CD8-positive, alpha-beta memory T cell (primary cell): ENCODE measurements at regions of chr2 and their contacts with region 1.

Region 1: GRCh38 chr2:71068218-71069035 is at the start of gene NAGK:
- DNase-seq: peak; percentile 96 to 100 (median 99)
- H3K4me3 ChIP-seq: peak within 1 kb of the TSS; percentile 94
- H3K4me3 Mint-ChIP-seq: peak within 1 kb of the TSS; percentile 93 to 98 (median 96)
- H3K27ac ChIP-seq: peak within 1 kb of the TSS; percentile 96
- H3K27ac Mint-ChIP-seq: peak within 1 kb of the TSS; percentile 98 to 100 (median 99)
- H3K4me1 ChIP-seq: peaks cover 46% of the 10 kb centered on the region
- H3K4me1 Mint-ChIP-seq: peaks cover 52 to 67% (median 60%) of the 10 kb centered on the region in 3 donors
- H3K27me3 ChIP-seq: no peaks in the 10 kb centered on the region
- H3K27me3 Mint-ChIP-seq: peaks cover 0 to 5% of the 10 kb centered on the region in 2 donors
- total RNA-seq, gene NAGK: 76.3 to 77.2 TPM

Region 2: GRCh38 chr2:71000780-71001591 is 67.4 kb before region 1 on chr2:
- CTCF ChIA-PET with region 1: interaction called, 15 read pairs
- POLR2A ChIA-PET with region 1: no interaction called
- DNase-seq: peak; percentile 70 to 88 (median 74)
- H3K4me3 ChIP-seq: peak overlapping the region; percentile 62
- H3K4me3 Mint-ChIP-seq: peak overlapping the region; percentile 43 to 79 (median 61)
- H3K27ac ChIP-seq: no peak overlapping the region
- H3K27ac Mint-ChIP-seq: peak overlapping the region; percentile 6 to 87 (median 57)
- H3K4me1 ChIP-seq: peaks cover 8% of the 10 kb centered on the region
- H3K4me1 Mint-ChIP-seq: peaks cover 10 to 12% (median 12%) of the 10 kb centered on the region in 3 donors
- H3K27me3 ChIP-seq: no peaks in the 10 kb centered on the region
- H3K27me3 Mint-ChIP-seq: peaks cover 6 to 9% of the 10 kb centered on the region in 2 donors

Region 3: GRCh38 chr2:71130113-71130904 is 61.9 kb after region 1 on chr2 and contains the starts of genes MCEE and MPHOSPH10:
- CTCF ChIA-PET with region 1: interaction called, 6 read pairs
- POLR2A ChIA-PET with region 1: interaction called, 21 read pairs
- DNase-seq: peak; percentile 82 to 90 (median 86)
- H3K4me3 ChIP-seq: peak within 1 kb of the TSS; percentile 99
- H3K4me3 Mint-ChIP-seq: no peak within 1 kb of the TSS
- H3K27ac ChIP-seq: peak within 1 kb of the TSS; percentile 92
- H3K27ac Mint-ChIP-seq: peak within 1 kb of the TSS in 1 of 8 donors; percentile 99
- H3K4me1 ChIP-seq: peaks cover 25% of the 10 kb centered on the region
- H3K4me1 Mint-ChIP-seq: peaks cover 20 to 29% (median 29%) of the 10 kb centered on the region in 3 donors
- H3K27me3 ChIP-seq: no peaks in the 10 kb centered on the region
- H3K27me3 Mint-ChIP-seq: no peaks in the 10 kb centered on the region
- total RNA-seq, gene MCEE: 12.3 to 13.5 TPM
- total RNA-seq, gene MPHOSPH10: 57.8 to 65.4 TPM

Region 4: GRCh38 chr2:71226965-71227560 is 158.6 kb after region 1 on chr2 and contains the start of gene PAIP2B:
- CTCF ChIA-PET with region 1: no interaction called
- POLR2A ChIA-PET with region 1: interaction called, 14 read pairs
- DNase-seq: peak; percentile 94 to 98 (median 97)
- H3K4me3 ChIP-seq: peak within 1 kb of the TSS; percentile 78
- H3K4me3 Mint-ChIP-seq: peak within 1 kb of the TSS; percentile 80 to 98 (median 97)
- H3K27ac ChIP-seq: peak within 1 kb of the TSS; percentile 62
- H3K27ac Mint-ChIP-seq: peak within 1 kb of the TSS; percentile 76 to 99 (median 95)
- H3K4me1 ChIP-seq: peaks cover 12% of the 10 kb centered on the region
- H3K4me1 Mint-ChIP-seq: peaks cover 17 to 31% (median 26%) of the 10 kb centered on the region in 3 donors
- H3K27me3 ChIP-seq: no peaks in the 10 kb centered on the region
- H3K27me3 Mint-ChIP-seq: peaks cover 7 to 19% of the 10 kb centered on the region in 2 donors
- total RNA-seq, gene PAIP2B: 2.1 to 2.3 TPM

Region 5: DNA sequence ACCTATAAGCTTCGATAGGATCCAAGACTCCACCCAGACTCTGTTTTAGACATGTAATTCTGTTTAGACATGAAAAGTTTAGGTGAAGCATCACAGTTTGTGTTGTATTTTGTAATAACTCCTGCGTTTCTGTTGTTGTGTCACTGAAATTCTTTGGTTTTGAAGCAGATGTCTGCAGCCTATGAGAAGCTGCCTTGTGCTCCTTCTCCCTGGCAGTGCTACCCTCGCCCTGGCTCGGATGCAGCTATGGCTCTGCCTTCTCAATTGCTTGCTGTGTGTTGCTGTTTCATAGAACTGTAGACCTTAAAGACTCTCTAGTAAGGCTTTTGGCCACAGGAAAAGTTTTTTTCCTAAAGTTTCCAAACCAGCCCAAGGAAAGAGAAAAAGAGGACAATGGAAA is 223.0 kb after region 1 on chr2:
- CTCF ChIA-PET with region 1: no interaction called
- POLR2A ChIA-PET with region 1: no interaction called
- DNase-seq: no peak
- H3K4me3 ChIP-seq: no peak overlapping the region
- H3K4me3 Mint-ChIP-seq: no peak overlapping the region
- H3K27ac ChIP-seq: no peak overlapping the region
- H3K27ac Mint-ChIP-seq: no peak overlapping the region
- H3K4me1 ChIP-seq: no peaks in the 10 kb centered on the region
- H3K4me1 Mint-ChIP-seq: no peaks in the 10 kb centered on the region
- H3K27me3 ChIP-seq: no peaks in the 10 kb centered on the region
- H3K27me3 Mint-ChIP-seq: peaks cover 10 to 35% of the 10 kb centered on the region in 2 donors

Region 6: DNA sequence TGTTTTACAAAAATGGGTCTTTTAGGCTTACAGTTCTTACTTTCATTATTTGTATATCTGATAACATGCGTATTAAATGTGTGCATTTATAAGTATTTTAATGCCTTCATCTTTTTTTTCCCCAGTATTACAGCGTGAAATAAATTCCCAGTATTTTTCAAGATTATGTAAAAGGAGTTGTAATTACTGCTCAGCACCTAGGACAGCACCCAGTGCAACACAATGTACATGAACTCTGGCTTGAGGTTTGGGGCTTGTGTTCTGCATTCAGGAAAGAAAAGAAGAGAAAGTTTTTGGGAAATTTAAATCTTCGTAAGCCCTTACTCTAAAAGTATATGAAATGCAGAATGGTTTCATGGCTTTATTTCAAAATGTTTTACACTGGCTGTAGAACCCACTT is 279.9 kb after region 1 on chr2:
- CTCF ChIA-PET with region 1: no interaction called
- POLR2A ChIA-PET with region 1: no interaction called
- DNase-seq: no peak
- H3K4me3 ChIP-seq: no peak overlapping the region
- H3K4me3 Mint-ChIP-seq: no peak overlapping the region
- H3K27ac ChIP-seq: no peak overlapping the region
- H3K27ac Mint-ChIP-seq: no peak overlapping the region
- H3K4me1 ChIP-seq: peaks cover 11% of the 10 kb centered on the region
- H3K4me1 Mint-ChIP-seq: peaks cover 64 to 88% (median 86%) of the 10 kb centered on the region in 3 donors
- H3K27me3 ChIP-seq: no peaks in the 10 kb centered on the region
- H3K27me3 Mint-ChIP-seq: no peaks in the 10 kb centered on the region